A673 (cell line): ENCODE measurements at regions of chr12 and their contacts with region 1.

Region 1: GRCh38 chr12:29552324-29552927 is 54.9 kb upstream of the OVCH1 start:
- DNase-seq: peak; percentile 57
- H3K4me3 ChIP-seq: no peak overlapping the region
- H3K27ac ChIP-seq: no peak overlapping the region
- H3K4me1 ChIP-seq: no peaks in the 10 kb centered on the region
- H3K27me3 ChIP-seq: peaks cover 4% of the 10 kb centered on the region
- CTCF ChIP-seq: peak; percentile 88

Region 2: GRCh38 chr12:28306535-28306934 is 1245.9 kb before region 1 on chr12:
- CTCF ChIA-PET with region 1: no interaction called
- POLR2A ChIA-PET with region 1: no interaction called
- intact Hi-C with region 1: no loop called
- DNase-seq: no peak
- H3K4me3 ChIP-seq: no peak overlapping the region
- H3K27ac ChIP-seq: no peak overlapping the region
- H3K4me1 ChIP-seq: no peaks in the 10 kb centered on the region
- H3K27me3 ChIP-seq: no peaks in the 10 kb centered on the region
- CTCF ChIP-seq: no peak

Region 3: GRCh38 chr12:29343022-29343799 is 209.2 kb before region 1 on chr12:
- CTCF ChIA-PET with region 1: no interaction called
- POLR2A ChIA-PET with region 1: no interaction called
- intact Hi-C with region 1: no loop called
- DNase-seq: no peak
- H3K4me3 ChIP-seq: no peak overlapping the region
- H3K27ac ChIP-seq: no peak overlapping the region
- H3K4me1 ChIP-seq: no peaks in the 10 kb centered on the region
- H3K27me3 ChIP-seq: no peaks in the 10 kb centered on the region
- CTCF ChIP-seq: no peak

Region 4: DNA sequence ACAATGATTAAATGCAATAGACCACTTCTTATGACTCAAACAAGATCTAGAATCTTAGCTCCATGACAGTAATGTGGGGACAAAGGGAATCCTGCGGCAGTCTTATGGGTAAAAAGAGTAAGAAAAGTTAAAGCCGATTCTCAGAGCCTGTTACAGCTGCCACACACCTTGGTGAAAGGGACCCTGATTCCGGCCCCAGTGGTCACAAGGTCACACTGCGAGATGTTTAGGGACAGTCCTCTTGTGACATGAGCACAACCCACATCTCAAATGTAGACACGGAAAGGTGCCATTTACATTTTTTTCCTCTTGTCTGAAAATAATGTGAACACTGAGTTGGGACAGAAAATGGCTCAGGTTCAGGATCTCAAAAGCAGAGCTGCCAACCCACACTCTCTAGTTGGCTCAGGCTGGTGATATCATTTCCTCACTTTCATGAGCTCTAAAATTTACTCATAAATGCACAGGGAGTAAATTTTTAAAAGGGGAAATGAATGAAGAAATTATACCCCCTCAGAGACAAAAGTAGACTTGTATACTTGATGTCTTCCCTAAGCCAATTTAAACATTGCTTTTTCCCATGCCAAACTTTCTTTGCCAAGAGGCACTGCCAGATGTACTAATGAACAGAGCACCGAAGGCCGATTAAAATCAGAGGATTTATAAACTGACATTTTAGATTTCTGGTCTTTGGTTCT is 58.2 kb after region 1 on chr12:
- CTCF ChIA-PET with region 1: no interaction called
- POLR2A ChIA-PET with region 1: no interaction called
- intact Hi-C with region 1: no loop called
- DNase-seq: peak; percentile 36
- H3K4me3 ChIP-seq: no peak overlapping the region
- H3K27ac ChIP-seq: no peak overlapping the region
- H3K4me1 ChIP-seq: peaks cover 8% of the 10 kb centered on the region
- H3K27me3 ChIP-seq: peaks cover 17% of the 10 kb centered on the region
- CTCF ChIP-seq: no peak

Region 5: DNA sequence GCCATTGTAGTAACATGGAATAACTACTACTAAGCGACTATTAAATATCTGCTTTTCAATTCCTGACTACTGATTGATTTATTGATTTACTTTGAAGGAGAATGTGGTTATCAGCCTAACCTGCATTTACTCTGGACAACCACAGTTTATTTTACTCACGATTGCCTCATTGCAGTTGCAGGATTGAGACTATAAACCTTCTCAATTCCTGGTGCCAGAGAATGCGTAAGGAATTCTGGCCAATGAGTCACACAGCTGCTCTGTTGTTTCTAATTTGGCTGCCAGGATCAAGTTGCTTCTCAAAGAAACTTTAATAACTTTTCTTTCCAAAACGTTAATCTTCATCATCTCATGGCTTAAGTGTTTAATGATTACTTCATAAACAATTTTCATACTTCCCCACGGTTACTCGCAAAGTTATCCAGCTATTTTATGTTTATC is 244.4 kb after region 1 on chr12:
- CTCF ChIA-PET with region 1: no interaction called
- POLR2A ChIA-PET with region 1: no interaction called
- intact Hi-C with region 1: loop called (anchors 5 kb)
- DNase-seq: peak; percentile 34
- H3K4me3 ChIP-seq: no peak overlapping the region
- H3K27ac ChIP-seq: no peak overlapping the region
- H3K4me1 ChIP-seq: peaks cover 9% of the 10 kb centered on the region
- H3K27me3 ChIP-seq: no peaks in the 10 kb centered on the region
- CTCF ChIP-seq: no peak

Region 6: DNA sequence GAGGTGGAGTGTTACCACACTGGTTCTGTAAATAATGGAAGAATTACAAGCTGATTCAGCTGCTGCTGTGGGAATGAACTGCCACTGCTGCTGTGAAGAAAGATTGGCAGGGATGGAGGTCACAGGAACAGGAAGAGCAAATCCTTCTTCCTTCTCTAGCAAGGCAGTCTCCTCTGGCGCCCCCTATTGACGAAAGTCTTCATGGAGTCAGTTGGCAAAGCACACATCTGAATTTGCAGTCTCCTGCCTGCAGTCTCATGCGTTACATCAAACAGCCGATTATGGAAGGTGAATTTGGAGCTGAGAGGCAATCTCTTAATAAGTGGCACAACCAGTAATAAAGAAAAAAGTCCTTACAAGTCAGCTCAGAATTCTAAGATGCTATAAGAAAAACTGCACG is 337.3 kb after region 1 on chr12:
- CTCF ChIA-PET with region 1: no interaction called
- POLR2A ChIA-PET with region 1: no interaction called
- intact Hi-C with region 1: loop called (anchors 5 kb)
- DNase-seq: peak; percentile 79
- H3K4me3 ChIP-seq: no peak overlapping the region
- H3K27ac ChIP-seq: no peak overlapping the region
- H3K4me1 ChIP-seq: no peaks in the 10 kb centered on the region
- H3K27me3 ChIP-seq: peaks cover 21% of the 10 kb centered on the region
- CTCF ChIP-seq: peak; percentile 78

Region 7: DNA sequence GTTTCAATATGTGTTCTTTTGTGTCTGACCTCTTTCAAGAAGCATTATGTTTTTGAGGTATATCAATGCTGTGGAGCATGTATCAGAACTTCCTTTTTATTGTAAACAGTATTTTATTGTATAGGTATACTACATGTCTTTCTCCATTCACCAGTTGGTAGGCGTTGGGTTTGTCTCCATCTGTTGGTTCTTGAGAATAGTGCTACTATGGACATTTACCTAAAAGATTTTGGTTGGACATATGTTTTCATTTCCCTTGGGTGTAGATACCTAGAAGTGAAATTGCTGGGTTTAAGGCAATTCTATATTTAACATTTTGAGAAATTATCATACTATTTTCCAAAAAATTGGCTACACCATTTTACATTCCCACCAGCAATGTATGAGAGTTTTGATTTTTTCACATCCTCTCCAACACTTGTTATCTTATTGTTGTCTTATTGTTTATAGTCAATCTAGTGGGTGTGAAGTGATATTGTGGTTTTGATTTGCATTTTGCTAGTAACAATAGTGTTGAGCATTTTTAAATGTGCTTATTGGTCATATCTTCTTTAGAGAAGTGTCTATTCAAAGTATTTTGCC is 734.0 kb after region 1 on chr12:
- CTCF ChIA-PET with region 1: no interaction called
- POLR2A ChIA-PET with region 1: no interaction called
- intact Hi-C with region 1: loop called (anchors 10 kb)
- DNase-seq: peak; percentile 59
- H3K4me3 ChIP-seq: no peak overlapping the region
- H3K27ac ChIP-seq: no peak overlapping the region
- H3K4me1 ChIP-seq: no peaks in the 10 kb centered on the region
- H3K27me3 ChIP-seq: peaks cover 8% of the 10 kb centered on the region
- CTCF ChIP-seq: peak; percentile 71